ENCODE measurements at regions of chr1 and their contacts with region 1.

Region 1: DNA sequence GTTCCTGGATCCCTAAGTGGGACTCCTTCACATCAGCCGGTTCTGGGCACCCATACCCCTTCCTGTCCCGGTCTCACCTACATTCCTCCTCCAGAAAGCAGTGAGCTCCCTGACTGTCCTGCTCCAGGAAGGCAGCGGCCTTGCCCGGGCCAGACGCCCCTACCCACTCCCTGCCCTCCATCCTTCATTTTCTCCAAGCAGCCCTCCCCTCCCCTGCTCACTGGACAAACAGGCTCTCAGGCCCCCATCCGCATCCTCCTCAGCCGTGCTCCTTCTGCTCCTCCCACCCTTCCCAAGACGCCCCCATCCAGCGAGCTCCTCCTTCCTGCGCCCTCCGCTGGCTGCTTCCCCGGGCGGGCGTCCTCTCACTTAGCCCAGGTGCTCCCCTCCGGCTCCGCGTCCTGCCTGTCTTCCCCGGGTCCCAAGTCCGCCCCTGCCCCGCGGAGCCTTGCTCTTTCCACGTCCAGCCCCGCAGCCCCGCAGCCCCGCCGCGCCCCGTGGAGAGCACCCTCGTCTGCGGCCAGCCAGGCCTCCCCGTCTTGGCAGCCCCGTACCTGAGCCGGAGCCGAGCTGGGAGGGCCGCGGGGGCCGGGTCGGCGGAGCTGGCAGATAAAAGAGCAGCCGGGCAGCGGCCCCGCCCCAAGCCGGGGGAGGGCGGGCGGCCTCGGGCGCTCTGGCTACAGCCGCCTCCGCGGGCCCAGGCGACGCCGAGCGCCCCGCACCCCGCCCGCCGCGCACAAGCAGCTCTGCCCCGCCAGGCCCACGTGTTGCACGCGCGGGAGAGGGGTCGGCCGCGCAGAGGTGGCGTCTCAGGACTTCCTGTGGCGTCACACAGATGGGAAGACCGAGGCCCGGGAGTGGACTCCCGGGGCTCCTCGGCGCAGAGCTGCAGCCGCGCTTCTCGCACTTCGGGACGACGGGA is at the start of gene PAQR7:
- DNase-seq: peak in 8 of 9 experiments; percentile 49 to 80 (median 58)
- ATAC-seq: peak; percentile 83
- H3K4me3 ChIP-seq: peak within 1 kb of the TSS; percentile 58 to 76
- H3K4me3 Mint-ChIP-seq: peak within 1 kb of the TSS; percentile 85
- H3K27ac ChIP-seq: peak within 1 kb of the TSS; percentile 14 to 33
- H3K27ac Mint-ChIP-seq: peak within 1 kb of the TSS; percentile 64
- H3K4me1 ChIP-seq: peaks cover 11% of the 10 kb centered on the region
- H3K4me1 Mint-ChIP-seq: peaks cover 8% of the 10 kb centered on the region
- H3K27me3 ChIP-seq: no peaks in the 10 kb centered on the region
- H3K27me3 Mint-ChIP-seq: no peaks in the 10 kb centered on the region
- CTCF ChIP-seq: no peak
- total RNA-seq, gene PAQR7: 2.1 to 2.3 TPM

Region 2: DNA sequence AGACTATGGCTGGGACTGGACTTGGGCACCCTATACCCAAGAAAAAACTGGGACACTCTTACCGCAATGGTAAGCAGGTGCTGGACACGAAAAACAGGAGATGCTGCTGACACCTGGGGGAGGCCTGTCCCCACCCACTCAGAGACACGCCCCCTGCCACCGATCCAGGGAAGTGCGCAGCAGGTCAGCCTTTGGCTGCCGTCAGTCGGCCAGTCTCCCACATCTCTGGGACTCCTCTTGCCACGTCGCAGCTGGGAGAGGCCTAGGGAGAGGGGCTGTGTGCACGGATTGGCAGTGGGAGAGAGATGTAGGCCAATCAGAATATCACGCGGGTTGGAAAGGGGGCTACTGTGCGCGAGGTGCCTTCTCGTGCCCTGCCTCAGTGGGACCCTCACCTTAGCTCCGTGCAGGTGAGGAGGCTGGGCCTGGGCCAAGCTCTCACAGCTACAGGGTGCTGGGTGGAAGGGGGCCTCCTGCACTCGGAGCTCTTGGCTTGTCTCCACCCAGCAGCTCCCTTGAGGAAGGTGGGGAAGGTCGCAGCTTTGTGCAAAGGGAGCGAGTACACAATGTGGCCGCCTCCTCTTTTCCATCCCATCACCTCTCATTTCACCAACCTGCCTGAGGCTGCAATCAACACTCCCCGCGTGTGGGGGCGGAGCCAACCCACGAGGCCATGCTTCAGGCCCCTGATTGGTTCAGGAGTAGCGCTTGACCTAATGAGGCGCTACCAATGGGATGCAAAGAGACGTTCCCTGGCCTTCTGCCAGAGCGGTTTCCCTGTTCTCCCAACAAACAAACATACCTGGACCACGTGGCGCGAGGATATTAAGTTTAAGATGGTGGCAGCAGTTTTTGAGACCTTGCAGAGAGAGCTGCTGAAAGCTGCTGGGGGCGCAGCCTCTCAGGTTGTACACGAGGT is 357.5 kb before region 1 on chr1:
- CTCF ChIA-PET with region 1: no interaction called
- POLR2A ChIA-PET with region 1: no interaction called
- intact Hi-C with region 1: no loop called
- DNase-seq: no peak
- ATAC-seq: no peak
- H3K4me3 ChIP-seq: no peak overlapping the region
- H3K4me3 Mint-ChIP-seq: no peak overlapping the region
- H3K27ac ChIP-seq: no peak overlapping the region
- H3K27ac Mint-ChIP-seq: no peak overlapping the region
- H3K4me1 ChIP-seq: peaks cover 5% of the 10 kb centered on the region
- H3K4me1 Mint-ChIP-seq: peaks cover 8% of the 10 kb centered on the region
- H3K27me3 ChIP-seq: no peaks in the 10 kb centered on the region
- H3K27me3 Mint-ChIP-seq: no peaks in the 10 kb centered on the region
- CTCF ChIP-seq: no peak

Region 3: GRCh38 chr1:25805863-25806225 is 69.4 kb before region 1 on chr1:
- CTCF ChIA-PET with region 1: no interaction called
- POLR2A ChIA-PET with region 1: no interaction called
- intact Hi-C with region 1: no loop called
- DNase-seq: no peak
- ATAC-seq: no peak
- H3K4me3 ChIP-seq: no peak overlapping the region
- H3K4me3 Mint-ChIP-seq: no peak overlapping the region
- H3K27ac ChIP-seq: no peak overlapping the region
- H3K27ac Mint-ChIP-seq: peak overlapping the region; percentile 55
- H3K4me1 ChIP-seq: peaks cover 25% of the 10 kb centered on the region
- H3K4me1 Mint-ChIP-seq: peaks cover 38% of the 10 kb centered on the region
- H3K27me3 ChIP-seq: no peaks in the 10 kb centered on the region
- H3K27me3 Mint-ChIP-seq: no peaks in the 10 kb centered on the region
- CTCF ChIP-seq: no peak

Region 4: DNA sequence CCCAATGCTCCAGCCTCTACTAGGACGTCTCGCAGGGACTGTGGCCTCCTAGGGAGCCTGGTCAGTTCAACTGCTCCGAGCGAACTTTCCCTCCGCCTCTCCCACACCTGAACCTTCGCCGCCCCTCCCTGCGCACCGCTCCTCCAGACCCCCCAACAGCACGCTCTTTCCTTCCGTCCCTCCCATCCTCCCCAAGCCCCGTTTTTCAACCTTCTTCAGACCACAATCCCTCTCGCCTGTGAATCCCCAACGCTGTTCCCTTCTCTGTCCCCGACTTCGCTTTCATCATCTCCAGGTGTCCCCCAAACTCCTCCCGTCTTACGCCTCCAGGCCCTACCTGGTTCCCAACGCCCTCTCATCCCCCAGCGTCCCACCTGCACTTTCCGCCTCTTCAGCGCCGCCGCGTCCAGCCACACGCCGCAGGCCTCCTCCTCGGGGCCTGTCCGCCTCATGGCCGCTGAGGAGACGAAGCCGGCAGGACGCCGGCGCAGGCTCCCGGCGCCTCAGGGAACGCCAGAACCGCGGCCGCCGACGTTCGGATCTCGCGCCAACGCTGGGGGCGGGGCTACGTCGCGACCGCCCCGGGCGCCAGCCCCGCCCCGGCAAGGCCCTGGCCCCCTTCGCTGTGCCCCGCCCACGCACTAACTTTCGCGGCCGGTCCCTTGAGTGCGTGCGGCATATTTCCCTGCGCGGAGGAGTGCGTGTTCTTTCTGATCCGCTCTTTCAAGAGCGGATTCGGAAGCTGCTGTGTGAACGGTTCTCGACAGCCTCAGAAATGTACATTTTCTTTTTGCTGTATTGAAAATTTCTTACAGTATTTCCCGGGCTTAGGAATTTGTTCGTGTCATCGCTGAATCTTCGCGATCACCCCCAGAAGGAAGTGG is 16.0 kb before region 1 on chr1 and contains the start of gene AUNIP:
- CTCF ChIA-PET with region 1: no interaction called
- POLR2A ChIA-PET with region 1: interaction called, 4 read pairs
- intact Hi-C with region 1: loop called in 1 of 2 experiments (anchors 1 kb)
- DNase-seq: peak; percentile 72 to 95 (median 88)
- ATAC-seq: peak; percentile 99
- H3K4me3 ChIP-seq: peak within 1 kb of the TSS; percentile 63 to 75
- H3K4me3 Mint-ChIP-seq: peak within 1 kb of the TSS; percentile 92
- H3K27ac ChIP-seq: peak within 1 kb of the TSS; percentile 66 to 71
- H3K27ac Mint-ChIP-seq: peak within 1 kb of the TSS; percentile 89
- H3K4me1 ChIP-seq: peaks cover 16% of the 10 kb centered on the region
- H3K4me1 Mint-ChIP-seq: peaks cover 15% of the 10 kb centered on the region
- H3K27me3 ChIP-seq: no peaks in the 10 kb centered on the region
- H3K27me3 Mint-ChIP-seq: no peaks in the 10 kb centered on the region
- CTCF ChIP-seq: no peak
- total RNA-seq, gene AUNIP: 0.30 TPM in 1 of 2 experiments, not detected in the other

Measured in CD8-positive, alpha-beta T cell (primary cell).